Panc1 (cell line): ENCODE measurements at regions of chr11 and their contacts with region 1.

Region 1: GRCh38 chr11:45102810-45103621 is 43.4 kb upstream of the PRDM11 start:
- DNase-seq: peak; percentile 42
- ATAC-seq: peak; percentile 76
- H3K4me3 ChIP-seq: 0 out of 4 replicates have a peak overlapping the region, but pooled peaks of 1 of the 2 experiments have one; percentile 16
- H3K27ac ChIP-seq: peak overlapping the region; percentile 34; the same call in 1 of the 2 replicates
- H3K4me1 ChIP-seq: peaks cover 9% of the 10 kb centered on the region
- H3K27me3 ChIP-seq: no peaks in the 10 kb centered on the region; the same call in none of the 2 replicates
- CTCF ChIP-seq: peak; percentile 94

Region 2: GRCh38 chr11:44927174-44927661 is 175.8 kb before region 1 on chr11:
- CTCF ChIA-PET with region 1: interaction called, 115 read pairs
- POLR2A ChIA-PET with region 1: interaction called, 3 read pairs
- in situ Hi-C with region 1: no loop called
- intact Hi-C with region 1: loop called (anchors 1 kb)
- DNase-seq: peak; percentile 27
- ATAC-seq: peak; percentile 88
- H3K4me3 ChIP-seq: peak overlapping the region in 1 of 2 experiments; percentile 20; a peak in 2 of 4 replicates
- H3K27ac ChIP-seq: no peak overlapping the region
- H3K4me1 ChIP-seq: peaks cover 17% of the 10 kb centered on the region
- H3K27me3 ChIP-seq: no peaks in the 10 kb centered on the region
- CTCF ChIP-seq: peak; percentile 96

Region 3: DNA sequence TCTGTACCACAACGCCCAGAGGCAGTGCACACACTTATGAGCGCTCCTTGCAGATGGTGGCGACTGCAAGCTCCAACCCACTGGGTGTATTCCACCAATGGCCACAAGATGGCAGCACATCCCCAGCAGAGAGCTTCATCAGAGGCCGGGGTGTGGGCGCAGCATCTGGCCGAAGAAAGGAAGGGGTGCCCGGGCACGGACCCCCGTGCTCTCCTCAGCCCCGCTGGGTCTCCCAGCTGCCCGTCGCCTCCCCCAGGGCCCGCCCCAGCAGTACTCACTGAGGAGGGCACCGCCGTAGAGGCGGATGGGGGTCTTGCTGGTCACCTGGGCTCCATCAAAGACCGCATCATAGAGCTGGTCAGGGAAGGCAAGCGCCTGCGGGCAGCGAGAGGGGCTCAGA is 166.5 kb before region 1 on chr11:
- CTCF ChIA-PET with region 1: interaction called, 115 read pairs
- POLR2A ChIA-PET with region 1: no interaction called
- in situ Hi-C with region 1: no loop called
- intact Hi-C with region 1: loop called (anchors 1 kb)
- DNase-seq: peak; percentile 57
- ATAC-seq: peak; percentile 86
- H3K4me3 ChIP-seq: no peak overlapping the region
- H3K27ac ChIP-seq: no peak overlapping the region
- H3K4me1 ChIP-seq: peaks cover 24% of the 10 kb centered on the region
- H3K27me3 ChIP-seq: no peaks in the 10 kb centered on the region
- CTCF ChIP-seq: peak; percentile 93

Region 4: GRCh38 chr11:45252134-45252855 is 149.3 kb after region 1 on chr11:
- CTCF ChIA-PET with region 1: no interaction called
- POLR2A ChIA-PET with region 1: no interaction called
- in situ Hi-C with region 1: no loop called
- intact Hi-C with region 1: no loop called
- DNase-seq: no peak
- ATAC-seq: peak; percentile 94
- H3K4me3 ChIP-seq: no peak overlapping the region
- H3K27ac ChIP-seq: no peak overlapping the region
- H3K4me1 ChIP-seq: no peaks in the 10 kb centered on the region
- H3K27me3 ChIP-seq: peaks cover 2% of the 10 kb centered on the region; the same call in 1 of the 2 replicates
- CTCF ChIP-seq: peak; percentile 88

Region 5: DNA sequence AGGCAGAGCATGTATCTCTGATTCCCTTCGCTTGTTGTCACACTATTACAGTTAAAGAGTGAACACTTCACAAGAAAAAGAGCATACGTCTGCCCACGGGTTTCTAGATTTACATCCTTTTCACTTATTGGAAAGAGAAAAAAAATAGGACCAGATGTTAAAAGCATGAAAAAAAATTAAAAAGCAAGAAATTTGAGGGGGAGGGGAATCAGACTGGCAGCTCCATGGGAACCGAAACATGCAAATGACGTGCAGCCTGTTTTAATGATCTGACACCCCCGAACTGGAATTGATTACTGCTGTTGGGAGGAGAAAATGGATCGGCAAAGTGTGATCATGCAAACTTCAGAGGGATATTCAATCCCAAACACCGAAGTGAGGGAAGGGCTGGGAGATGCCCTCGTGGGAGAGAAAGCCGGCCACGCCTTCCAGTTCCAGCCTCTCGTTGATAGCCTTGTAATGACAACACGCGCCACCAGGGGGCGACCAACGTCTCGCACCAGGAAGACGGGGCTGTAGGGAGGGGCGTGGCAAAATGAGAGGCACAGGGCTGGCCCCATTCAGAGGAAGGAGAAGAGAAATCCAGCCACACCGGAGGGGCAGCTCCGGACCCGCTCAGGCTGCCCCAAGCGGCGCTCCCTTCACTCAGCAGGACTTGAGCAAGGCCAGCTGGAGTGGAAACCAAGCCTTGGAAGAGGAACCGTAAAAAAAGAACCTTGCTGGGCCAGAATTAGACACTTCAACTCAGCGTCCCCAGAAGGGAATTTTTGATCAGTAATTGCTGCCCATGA is 236.9 kb after region 1 on chr11:
- CTCF ChIA-PET with region 1: no interaction called
- POLR2A ChIA-PET with region 1: no interaction called
- in situ Hi-C with region 1: loop called (anchors 25 kb)
- intact Hi-C with region 1: no loop called
- DNase-seq: peak; percentile 50
- ATAC-seq: peak; percentile 98
- H3K4me3 ChIP-seq: peak overlapping the region; percentile 4 to 35; a peak in 3 of 4 replicates
- H3K27ac ChIP-seq: no peak overlapping the region
- H3K4me1 ChIP-seq: no peaks in the 10 kb centered on the region
- H3K27me3 ChIP-seq: peaks cover 12% of the 10 kb centered on the region; the same call in 1 of the 2 replicates
- CTCF ChIP-seq: peak; percentile 95